ENCODE measurements at regions of chr6 and their contacts with region 1.

Region 1: DNA sequence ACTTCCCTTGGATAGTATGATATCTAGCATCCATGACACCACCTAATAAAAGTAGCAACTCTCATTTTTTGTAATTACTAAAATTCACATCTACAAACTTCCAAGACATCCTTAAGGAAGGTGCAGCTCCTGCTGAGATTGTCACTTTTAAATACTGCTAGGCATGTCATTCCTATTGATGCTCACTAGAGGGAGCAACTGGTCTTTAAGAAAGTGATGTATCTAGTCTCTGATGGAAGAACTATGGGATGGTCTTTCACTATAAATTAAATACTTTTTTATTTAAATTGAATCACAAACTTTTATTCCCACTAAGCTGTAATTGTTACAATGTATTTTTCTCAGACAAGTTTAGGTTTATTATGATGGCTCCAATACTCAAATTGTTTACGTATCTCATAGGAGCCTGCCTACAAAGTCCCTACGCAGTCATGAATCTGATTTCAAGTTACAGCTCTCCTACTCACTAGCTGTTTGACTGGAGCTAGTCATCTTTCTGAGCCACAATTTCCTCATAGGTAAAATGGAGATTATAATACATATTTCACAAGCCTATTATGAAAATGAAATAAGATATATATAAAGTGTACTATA is 8.1 kb upstream of the TSPYL1 start:
- DNase-seq: peak; percentile 65
- H3K4me3 ChIP-seq: no peak overlapping the region
- H3K27ac ChIP-seq: no peak overlapping the region
- H3K4me1 ChIP-seq: no peaks in the 10 kb centered on the region
- H3K27me3 ChIP-seq: no peaks in the 10 kb centered on the region
- CTCF ChIP-seq: peak; percentile 57
- POLR2A ChIP-seq: no peak

Region 2: DNA sequence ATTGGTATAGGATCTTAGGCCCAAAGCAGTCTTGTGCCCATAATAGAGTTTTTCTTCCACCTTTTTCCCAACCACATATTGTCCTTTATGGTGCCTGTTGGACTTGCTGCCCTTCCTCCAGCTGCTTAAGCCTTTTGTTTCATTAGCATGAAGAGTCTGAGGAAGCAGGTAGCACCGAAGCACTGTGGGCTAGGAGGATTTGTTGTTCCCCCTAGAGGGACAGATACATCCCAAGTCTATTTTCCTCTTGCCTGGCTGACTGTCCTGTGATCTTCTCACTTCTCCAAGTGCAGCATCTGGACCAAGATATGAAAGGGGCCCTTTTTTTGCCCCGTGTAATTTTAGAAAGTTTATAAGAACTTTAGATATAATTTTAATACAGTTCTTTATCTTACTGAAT is 111.2 kb before region 1 on chr6:
- CTCF ChIA-PET with region 1: no interaction called
- POLR2A ChIA-PET with region 1: no interaction called
- dilution Hi-C with region 1: no loop called
- intact Hi-C with region 1: no loop called
- DNase-seq: no peak
- H3K4me3 ChIP-seq: no peak overlapping the region
- H3K27ac ChIP-seq: no peak overlapping the region
- H3K4me1 ChIP-seq: no peaks in the 10 kb centered on the region
- H3K27me3 ChIP-seq: no peaks in the 10 kb centered on the region
- CTCF ChIP-seq: no peak
- POLR2A ChIP-seq: no peak

Region 3: GRCh38 chr6:116298973-116299372 is 11.2 kb after region 1 on chr6:
- CTCF ChIA-PET with region 1: interaction called, 12 read pairs
- POLR2A ChIA-PET with region 1: no interaction called
- dilution Hi-C with region 1: no loop called
- intact Hi-C with region 1: no loop called
- DNase-seq: no peak
- H3K4me3 ChIP-seq: no peak overlapping the region
- H3K27ac ChIP-seq: no peak overlapping the region
- H3K4me1 ChIP-seq: no peaks in the 10 kb centered on the region
- H3K27me3 ChIP-seq: no peaks in the 10 kb centered on the region
- CTCF ChIP-seq: no peak
- POLR2A ChIP-seq: no peak

Region 4: GRCh38 chr6:116371120-116371917 is 83.5 kb after region 1 on chr6:
- CTCF ChIA-PET with region 1: interaction called, 26 read pairs
- POLR2A ChIA-PET with region 1: no interaction called
- dilution Hi-C with region 1: no loop called
- intact Hi-C with region 1: loop called (anchors 5 kb)
- DNase-seq: peak; percentile 83
- H3K4me3 ChIP-seq: peak overlapping the region; percentile 71 to 82 (median 81)
- H3K27ac ChIP-seq: peak overlapping the region; percentile 32
- H3K4me1 ChIP-seq: peaks cover 6% of the 10 kb centered on the region
- H3K27me3 ChIP-seq: no peaks in the 10 kb centered on the region
- CTCF ChIP-seq: no peak
- POLR2A ChIP-seq: no peak

Region 5: GRCh38 chr6:116461932-116462885 is 174.4 kb after region 1 on chr6:
- CTCF ChIA-PET with region 1: interaction called, 4 read pairs
- POLR2A ChIA-PET with region 1: no interaction called
- dilution Hi-C with region 1: no loop called
- intact Hi-C with region 1: loop called (anchors 5 kb)
- DNase-seq: peak; percentile 49
- H3K4me3 ChIP-seq: peak overlapping the region in 2 of 3 experiments; percentile 10 to 31
- H3K27ac ChIP-seq: no peak overlapping the region
- H3K4me1 ChIP-seq: peaks cover 8% of the 10 kb centered on the region
- H3K27me3 ChIP-seq: peaks cover 23 to 26% of the 10 kb centered on the region in 2 experiments
- CTCF ChIP-seq: no peak
- POLR2A ChIP-seq: no peak

Region 6: GRCh38 chr6:116531675-116532570 is 244.1 kb after region 1 on chr6:
- CTCF ChIA-PET with region 1: interaction called, 90 read pairs
- POLR2A ChIA-PET with region 1: interaction called, 3 read pairs
- dilution Hi-C with region 1: no loop called
- intact Hi-C with region 1: loop called (anchors 1 kb)
- DNase-seq: peak; percentile 86
- H3K4me3 ChIP-seq: no peak overlapping the region
- H3K27ac ChIP-seq: no peak overlapping the region
- H3K4me1 ChIP-seq: peaks cover 16% of the 10 kb centered on the region
- H3K27me3 ChIP-seq: peaks cover 0 to 2% of the 10 kb centered on the region in 2 experiments
- CTCF ChIP-seq: peak; percentile 59 to 74
- POLR2A ChIP-seq: no peak

Region 7: GRCh38 chr6:116561377-116562018 is 273.7 kb after region 1 on chr6:
- CTCF ChIA-PET with region 1: interaction called, 47 read pairs
- POLR2A ChIA-PET with region 1: no interaction called
- dilution Hi-C with region 1: no loop called
- intact Hi-C with region 1: loop called (anchors 1 kb)
- DNase-seq: peak; percentile 84
- H3K4me3 ChIP-seq: no peak overlapping the region
- H3K27ac ChIP-seq: no peak overlapping the region
- H3K4me1 ChIP-seq: peaks cover 6% of the 10 kb centered on the region
- H3K27me3 ChIP-seq: no peaks in the 10 kb centered on the region
- CTCF ChIP-seq: peak; percentile 79 to 84
- POLR2A ChIP-seq: no peak

Region 8: DNA sequence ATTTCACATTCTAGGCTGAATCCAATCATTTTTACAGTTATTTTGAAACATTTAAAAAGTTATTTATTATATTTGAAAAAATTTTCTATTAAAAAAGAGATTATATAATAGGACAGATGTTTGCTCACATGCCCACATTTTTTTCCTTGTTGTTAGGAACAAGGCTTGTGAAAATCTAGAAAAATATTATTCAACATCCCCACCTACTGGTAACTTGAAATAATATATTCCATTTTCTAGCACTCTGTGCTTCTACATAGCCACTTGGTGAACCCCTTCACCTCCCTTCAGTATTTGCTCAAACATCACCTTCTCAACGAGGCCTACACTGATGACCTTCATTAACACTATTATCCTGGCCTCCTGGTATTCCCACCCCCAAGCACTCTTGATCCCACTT is 559.4 kb after region 1 on chr6:
- CTCF ChIA-PET with region 1: interaction called, 7 read pairs
- POLR2A ChIA-PET with region 1: no interaction called
- dilution Hi-C with region 1: no loop called
- intact Hi-C with region 1: loop called (anchors 5 kb)
- DNase-seq: peak; percentile 36
- H3K4me3 ChIP-seq: no peak overlapping the region
- H3K27ac ChIP-seq: no peak overlapping the region
- H3K4me1 ChIP-seq: no peaks in the 10 kb centered on the region
- H3K27me3 ChIP-seq: no peaks in the 10 kb centered on the region
- CTCF ChIP-seq: peak in 1 of 2 donors; percentile 7
- POLR2A ChIP-seq: no peak

Region 9: DNA sequence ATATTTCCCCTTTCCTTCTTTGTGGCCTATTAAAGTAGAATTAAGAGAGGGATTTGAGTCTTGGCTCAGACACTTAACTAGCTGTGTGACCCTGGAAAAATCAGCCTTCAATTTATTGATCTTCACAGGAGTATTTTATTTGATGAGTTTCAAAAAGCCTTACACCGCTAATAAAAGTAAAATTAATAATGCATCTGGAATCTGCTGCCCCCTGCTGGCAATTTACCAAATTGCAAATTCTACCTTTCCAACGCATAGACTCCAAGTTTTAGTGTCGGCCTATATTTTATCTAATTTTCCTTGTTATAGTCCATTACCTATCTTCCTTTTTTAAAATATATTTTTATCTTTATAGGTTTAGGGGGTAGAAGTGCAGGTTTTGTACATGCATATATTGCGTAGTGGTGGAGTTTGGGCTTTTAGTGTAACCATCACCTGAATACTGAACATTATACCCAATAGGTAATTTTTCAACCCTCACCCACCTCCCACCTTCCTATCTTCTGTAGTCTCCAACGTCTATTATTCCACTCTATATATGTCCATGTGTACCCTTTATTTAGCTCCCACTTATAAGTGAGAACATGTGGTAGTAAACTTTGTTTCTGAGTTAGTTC is 1268.2 kb after region 1 on chr6:
- CTCF ChIA-PET with region 1: no interaction called
- POLR2A ChIA-PET with region 1: no interaction called
- dilution Hi-C with region 1: no loop called
- intact Hi-C with region 1: no loop called
- DNase-seq: peak; percentile 68
- H3K4me3 ChIP-seq: no peak overlapping the region
- H3K27ac ChIP-seq: no peak overlapping the region
- H3K4me1 ChIP-seq: peaks cover 25% of the 10 kb centered on the region
- H3K27me3 ChIP-seq: no peaks in the 10 kb centered on the region
- CTCF ChIP-seq: peak; percentile 45 to 59
- POLR2A ChIP-seq: no peak

Measured in endothelial cell of umbilical vein (primary cell).